Vagina (tissue), 2 donors: ENCODE measurements at regions of chr19 and their contacts with region 1.

Region 1: GRCh38 chr19:49136771-49137171 is 17.4 kb downstream of the PPFIA3 start:
- DNase-seq: peak in 1 of 2 donors; percentile 87
- H3K4me3 ChIP-seq: no peak overlapping the region
- H3K27ac ChIP-seq: no peak overlapping the region
- H3K4me1 ChIP-seq: peaks cover 18% of the 10 kb centered on the region
- H3K27me3 ChIP-seq: no peaks in the 10 kb centered on the region
- CTCF ChIP-seq: no peak
- POLR2A ChIP-seq: no peak

Region 2: GRCh38 chr19:47523473-47523872 is 1613.3 kb before region 1 on chr19:
- intact Hi-C with region 1: loop called (anchors 5 kb)
- DNase-seq: no peak
- H3K4me3 ChIP-seq: no peak overlapping the region
- H3K27ac ChIP-seq: peak overlapping the region; percentile 2
- H3K4me1 ChIP-seq: no peaks in the 10 kb centered on the region
- H3K27me3 ChIP-seq: no peaks in the 10 kb centered on the region
- CTCF ChIP-seq: no peak
- POLR2A ChIP-seq: no peak

Region 3: DNA sequence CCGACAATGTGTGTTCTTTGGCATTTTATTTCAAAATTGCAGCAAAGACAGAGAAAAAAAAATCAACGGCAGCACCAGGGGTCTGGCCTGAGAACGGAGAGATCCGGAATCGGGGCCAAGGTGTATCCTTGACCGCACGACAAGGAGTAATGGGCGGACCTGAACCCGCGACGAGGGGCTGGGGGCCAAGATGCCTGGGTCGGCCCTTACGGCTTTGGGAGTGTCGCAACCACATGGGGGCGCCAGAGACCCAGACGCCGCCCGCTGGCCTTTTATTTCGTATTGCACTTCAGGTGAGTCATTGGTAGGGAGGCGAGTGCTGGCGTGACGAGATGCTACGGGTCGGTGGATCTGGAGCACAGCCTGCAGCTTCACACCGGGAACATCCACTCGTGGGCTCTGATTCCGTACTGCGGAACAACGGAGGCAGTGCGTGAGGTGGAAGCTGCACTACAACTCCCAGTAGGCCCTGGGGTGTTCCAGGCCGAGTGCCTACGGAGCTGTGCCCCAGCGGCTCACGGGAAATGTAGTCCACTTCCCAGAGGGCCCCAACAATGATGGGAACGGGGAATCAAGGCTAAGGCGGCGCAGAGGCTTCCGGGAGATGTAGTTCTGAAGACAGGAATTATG is 341.6 kb before region 1 on chr19:
- intact Hi-C with region 1: no loop called
- DNase-seq: no peak
- H3K4me3 ChIP-seq: peak overlapping the region; percentile 30 to 56
- H3K27ac ChIP-seq: peak overlapping the region; percentile 96
- H3K4me1 ChIP-seq: peaks cover 15% of the 10 kb centered on the region
- H3K27me3 ChIP-seq: no peaks in the 10 kb centered on the region
- CTCF ChIP-seq: peak; percentile 95 to 99 (median 97)
- POLR2A ChIP-seq: no peak

Region 4: DNA sequence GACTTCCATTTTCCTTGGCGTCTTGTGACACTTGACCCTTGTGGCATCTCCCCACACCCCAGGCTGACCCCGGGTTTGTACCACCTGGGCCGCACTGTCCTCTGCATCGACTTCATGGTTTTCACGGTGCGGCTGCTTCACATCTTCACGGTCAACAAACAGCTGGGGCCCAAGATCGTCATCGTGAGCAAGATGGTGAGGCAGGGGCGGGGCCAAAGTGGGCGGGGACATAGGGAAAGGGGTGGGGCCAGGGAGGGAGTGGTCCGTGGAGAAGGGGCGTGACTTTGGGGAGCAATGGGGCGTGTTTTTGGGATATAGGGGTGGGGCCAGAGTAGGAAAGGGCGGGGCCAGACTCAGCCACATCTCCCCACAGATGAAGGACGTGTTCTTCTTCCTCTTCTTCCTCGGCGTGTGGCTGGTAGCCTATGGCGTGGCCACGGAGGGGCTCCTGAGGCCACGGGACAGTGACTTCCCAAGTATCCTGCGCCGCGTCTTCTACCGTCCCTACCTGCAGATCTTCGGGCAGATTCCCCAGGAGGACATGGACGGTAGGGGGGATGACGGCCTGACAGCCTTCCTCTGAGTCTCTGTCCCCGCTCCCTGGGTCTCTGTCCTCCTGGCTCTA is 63.6 kb after region 1 on chr19:
- intact Hi-C with region 1: no loop called
- DNase-seq: no peak
- H3K4me3 ChIP-seq: no peak overlapping the region
- H3K27ac ChIP-seq: no peak overlapping the region
- H3K4me1 ChIP-seq: no peaks in the 10 kb centered on the region
- H3K27me3 ChIP-seq: no peaks in the 10 kb centered on the region
- CTCF ChIP-seq: no peak
- POLR2A ChIP-seq: no peak